Activated CD8-positive, alpha-beta T cell treated with anti-CD3 and anti-CD28 coated beads for 36 hours (primary cell): ENCODE measurements at regions of chr7 and their contacts with region 1.

Region 1: GRCh38 chr7:73842247-73842895 is at the start of gene METTL27:
- DNase-seq: peak; percentile 96
- ATAC-seq: peak; percentile 99
- H3K4me3 Mint-ChIP-seq: peak within 1 kb of the TSS; percentile 71
- H3K27ac Mint-ChIP-seq: peak within 1 kb of the TSS; percentile 55
- H3K4me1 Mint-ChIP-seq: peaks cover 11% of the 10 kb centered on the region
- H3K27me3 Mint-ChIP-seq: peaks cover 2% of the 10 kb centered on the region
- CTCF ChIP-seq: no peak
- total RNA-seq, gene METTL27: not detected

Region 2: DNA sequence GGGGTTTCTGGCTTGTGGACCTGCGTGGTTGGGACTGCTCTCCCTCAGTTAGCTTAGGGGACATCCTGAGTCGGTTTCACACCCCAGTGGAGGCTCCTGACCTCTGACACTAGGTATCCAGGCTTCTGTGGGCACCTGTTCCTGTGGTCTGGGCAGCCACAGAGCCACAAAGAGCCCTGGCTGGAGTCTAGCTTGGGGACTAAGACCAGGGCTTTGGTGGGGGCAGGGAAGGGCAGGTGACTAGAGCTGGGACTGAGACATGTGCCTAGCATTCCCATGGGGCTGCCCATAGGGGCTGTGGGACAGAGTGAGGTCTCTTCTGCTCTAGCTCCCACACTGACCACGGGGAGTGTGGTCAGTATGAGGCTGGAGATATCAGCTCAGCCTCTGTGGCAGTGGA is 14.6 kb after region 1 on chr7:
- CTCF ChIA-PET with region 1: interaction called, 27 read pairs
- POLR2A ChIA-PET with region 1: no interaction called
- intact Hi-C with region 1: no loop called
- DNase-seq: no peak
- ATAC-seq: no peak
- H3K4me3 Mint-ChIP-seq: no peak overlapping the region
- H3K27ac Mint-ChIP-seq: no peak overlapping the region
- H3K4me1 Mint-ChIP-seq: peaks cover 10% of the 10 kb centered on the region
- H3K27me3 Mint-ChIP-seq: peaks cover 9% of the 10 kb centered on the region
- CTCF ChIP-seq: no peak

Region 3: DNA sequence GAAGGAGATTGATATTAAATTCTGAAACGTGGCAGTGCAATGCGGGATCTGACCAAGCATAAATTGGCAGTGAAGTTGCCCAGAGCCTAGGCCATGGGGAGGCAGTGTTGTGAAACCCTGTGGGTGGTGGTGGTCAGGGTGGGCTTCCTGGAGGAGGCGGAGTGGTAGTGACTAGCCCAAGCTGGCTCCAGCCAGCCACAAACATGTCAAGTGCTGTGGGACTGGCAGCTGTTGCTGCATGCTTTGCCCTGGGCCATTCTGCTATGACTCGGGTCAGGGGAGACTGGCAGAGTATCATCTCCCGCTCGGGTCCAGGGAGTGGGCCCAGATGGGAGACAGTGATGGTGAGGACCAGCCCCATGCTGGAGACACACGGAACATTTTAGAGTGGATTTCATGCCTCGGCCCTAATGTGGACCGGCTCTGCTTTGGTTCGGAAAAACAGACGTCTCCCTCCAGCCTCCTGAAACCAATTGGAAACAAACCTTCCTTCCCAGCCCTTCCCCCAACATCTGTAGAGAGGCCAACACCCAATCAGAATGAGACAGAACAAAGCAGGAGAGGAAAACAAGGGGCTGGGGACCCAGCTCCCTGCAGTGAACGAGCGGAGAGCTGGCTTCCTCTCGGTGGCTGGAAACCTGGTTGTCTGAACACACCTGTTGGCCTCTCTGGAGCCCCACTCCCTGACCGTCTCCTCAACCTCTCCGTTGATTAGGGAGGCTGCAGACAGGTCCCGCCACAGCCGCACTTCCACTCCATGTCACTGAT is 76.7 kb after region 1 on chr7:
- CTCF ChIA-PET with region 1: no interaction called
- POLR2A ChIA-PET with region 1: no interaction called
- intact Hi-C with region 1: no loop called
- DNase-seq: no peak
- ATAC-seq: no peak
- H3K4me3 Mint-ChIP-seq: no peak overlapping the region
- H3K27ac Mint-ChIP-seq: no peak overlapping the region
- H3K4me1 Mint-ChIP-seq: no peaks in the 10 kb centered on the region
- H3K27me3 Mint-ChIP-seq: peaks cover 1% of the 10 kb centered on the region
- CTCF ChIP-seq: no peak